HEK293T (cell line): ENCODE measurements at regions of chr15 and their contacts with region 1.

Region 1: GRCh38 chr15:74053941-74054529 is 28.3 kb downstream of the GOLGA6A start:
- DNase-seq: peak; percentile 83

Region 2: GRCh38 chr15:73972984-73973682 is 80.9 kb before region 1 on chr15:
- CTCF ChIA-PET with region 1: interaction called, 30 read pairs
- POLR2A ChIA-PET with region 1: interaction called, 3 read pairs
- DNase-seq: peak; percentile 87

Region 3: GRCh38 chr15:74036271-74037170 is 17.5 kb before region 1 on chr15:
- CTCF ChIA-PET with region 1: interaction called, 10 read pairs
- POLR2A ChIA-PET with region 1: no interaction called
- DNase-seq: peak; percentile 70

Region 4: DNA sequence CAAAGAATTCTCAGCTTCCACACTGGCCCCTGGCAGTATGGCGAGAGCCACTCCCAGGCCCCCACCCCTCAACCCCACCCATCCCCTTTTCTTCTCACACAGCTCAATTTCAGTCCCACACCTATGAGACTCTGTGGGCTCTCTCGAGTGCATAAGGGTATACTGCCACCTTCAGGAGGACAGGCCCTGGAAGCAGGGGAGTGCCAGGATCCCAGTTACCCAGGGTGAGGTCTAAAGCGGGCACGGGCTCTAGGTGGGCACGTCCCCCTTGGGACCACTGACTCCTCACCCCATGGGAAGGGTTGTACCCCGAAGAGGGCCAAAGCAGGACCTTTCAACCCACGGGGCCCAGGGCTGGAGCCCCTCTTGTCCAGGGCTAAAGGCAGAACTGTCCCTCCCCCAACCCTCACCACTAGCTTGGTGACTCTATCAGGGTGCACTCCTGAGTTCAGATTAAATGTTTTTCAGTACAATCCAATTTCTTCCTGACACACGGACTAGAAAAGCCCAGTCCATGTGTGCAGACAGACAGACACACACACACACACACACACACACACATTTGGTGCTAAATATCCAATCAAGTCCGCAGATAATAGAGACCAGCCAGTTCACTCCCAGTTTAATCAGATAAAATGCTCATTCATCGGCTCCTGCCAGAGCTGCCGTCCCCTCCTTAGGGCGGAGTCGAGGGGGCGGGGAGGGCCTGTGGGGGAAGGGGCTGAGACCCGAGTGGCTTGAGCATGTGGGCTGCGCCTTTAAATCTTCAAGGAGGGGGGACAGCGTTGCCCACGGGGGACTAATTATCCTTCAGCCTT is 254.0 kb after region 1 on chr15:
- CTCF ChIA-PET with region 1: interaction called, 12 read pairs
- POLR2A ChIA-PET with region 1: no interaction called
- DNase-seq: peak; percentile 61

Region 5: DNA sequence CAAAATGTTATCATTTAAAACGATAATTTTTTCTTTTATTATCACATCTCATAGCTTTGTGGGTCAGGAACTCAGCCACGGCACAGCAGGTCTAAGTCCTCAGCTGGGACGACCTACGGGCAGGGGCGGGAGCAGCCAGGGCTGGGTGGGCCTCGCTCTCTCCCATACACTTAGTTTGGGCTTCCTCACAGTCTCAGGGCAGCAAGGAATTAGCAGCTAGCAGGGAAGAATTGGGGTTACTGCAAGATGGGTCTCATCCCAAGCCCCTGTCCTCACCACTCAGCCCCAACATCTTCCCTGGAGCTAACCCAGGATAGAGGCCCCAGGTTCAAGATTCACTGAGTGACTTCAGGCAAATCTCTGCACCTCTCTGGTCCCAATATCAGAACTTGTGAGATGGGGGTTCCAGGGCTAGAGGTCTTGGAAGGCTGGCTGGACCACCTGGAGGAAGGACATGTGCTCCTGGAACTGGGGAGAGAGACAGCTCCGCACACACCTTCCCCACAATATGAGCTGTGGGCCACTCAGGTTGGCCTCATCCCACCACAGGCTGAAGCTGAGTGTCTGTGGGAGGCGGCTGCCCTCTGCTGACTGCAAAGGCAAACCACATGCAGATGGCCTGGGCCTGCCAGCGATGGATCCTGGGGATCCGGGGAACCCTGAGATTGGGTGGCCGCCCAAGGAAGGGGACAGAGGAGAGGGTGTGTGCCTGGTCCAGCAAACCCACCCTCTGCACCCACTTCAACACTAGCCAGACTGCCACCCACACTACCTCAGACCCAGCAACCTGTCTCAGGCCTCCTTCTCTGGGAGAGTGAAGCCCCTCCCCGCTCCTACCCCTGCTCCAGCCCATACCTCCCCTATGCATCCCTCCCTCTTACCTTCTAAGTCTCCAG is 268.4 kb after region 1 on chr15:
- CTCF ChIA-PET with region 1: interaction called, 48 read pairs
- POLR2A ChIA-PET with region 1: no interaction called
- DNase-seq: peak; percentile 82